ENCODE measurements at regions of chr3 and their contacts with region 1.

Region 1: DNA sequence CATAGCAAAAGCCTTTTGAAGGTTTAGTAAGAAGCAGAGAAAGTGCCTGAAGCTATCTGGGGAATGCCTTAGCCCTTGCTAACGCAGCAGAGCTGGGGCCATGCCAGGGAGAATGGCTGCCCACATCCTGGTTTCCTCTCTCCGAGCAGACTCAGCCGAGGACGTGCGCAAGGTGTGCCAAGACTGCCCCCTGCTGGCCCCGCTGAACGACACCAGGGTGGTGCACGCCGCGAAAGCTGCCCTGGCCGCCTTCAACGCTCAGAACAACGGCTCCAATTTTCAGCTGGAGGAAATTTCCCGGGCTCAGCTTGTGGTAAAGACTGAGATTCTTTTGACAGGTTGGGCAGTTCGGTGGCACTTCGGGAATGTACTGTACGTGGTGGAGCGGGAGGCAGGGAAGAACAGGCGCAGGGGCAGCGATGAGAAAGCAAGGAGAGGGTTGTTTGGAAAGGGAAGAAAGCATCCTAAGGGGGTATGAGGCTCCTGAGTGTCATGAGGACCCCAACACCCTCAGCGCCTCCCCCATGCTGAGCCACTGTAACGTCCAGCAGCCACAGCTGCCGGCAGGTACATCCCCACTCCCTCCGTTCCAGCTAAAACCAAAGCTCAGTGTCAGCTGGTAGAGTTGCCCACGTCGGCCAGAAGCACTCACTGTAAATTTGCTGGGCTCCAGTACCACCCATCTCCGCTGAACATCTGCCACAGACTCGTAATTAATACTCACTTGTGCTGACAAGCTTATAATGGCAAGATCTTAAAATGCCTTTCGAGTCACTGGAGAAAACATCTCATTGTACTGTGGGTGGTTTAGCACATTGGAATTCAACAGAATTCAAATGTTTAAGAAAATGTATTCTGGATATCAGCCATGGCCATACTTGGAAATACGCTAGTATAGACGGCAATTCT is 4.4 kb downstream of the AHSG start:
- ATAC-seq: peak; percentile 74 to 99 (median 84)
- H3K4me3 ChIP-seq: no peak overlapping the region
- H3K27ac ChIP-seq: no peak overlapping the region
- H3K4me1 ChIP-seq: peaks cover 2 to 3% of the 10 kb centered on the region in 2 donors

Region 2: GRCh38 chr3:186717039-186717457 is 99.8 kb after region 1 on chr3 and contains the start of gene KNG1:
- in situ Hi-C with region 1: no loop called
- ATAC-seq: no peak
- H3K4me3 ChIP-seq: no peak within 1 kb of the TSS
- H3K27ac ChIP-seq: no peak within 1 kb of the TSS
- H3K4me1 ChIP-seq: no peaks in the 10 kb centered on the region
- total RNA-seq, gene KNG1: 0.04 to 0.24 (median 0.10) TPM in 5 of 8 experiments, not detected in the others

Region 3: DNA sequence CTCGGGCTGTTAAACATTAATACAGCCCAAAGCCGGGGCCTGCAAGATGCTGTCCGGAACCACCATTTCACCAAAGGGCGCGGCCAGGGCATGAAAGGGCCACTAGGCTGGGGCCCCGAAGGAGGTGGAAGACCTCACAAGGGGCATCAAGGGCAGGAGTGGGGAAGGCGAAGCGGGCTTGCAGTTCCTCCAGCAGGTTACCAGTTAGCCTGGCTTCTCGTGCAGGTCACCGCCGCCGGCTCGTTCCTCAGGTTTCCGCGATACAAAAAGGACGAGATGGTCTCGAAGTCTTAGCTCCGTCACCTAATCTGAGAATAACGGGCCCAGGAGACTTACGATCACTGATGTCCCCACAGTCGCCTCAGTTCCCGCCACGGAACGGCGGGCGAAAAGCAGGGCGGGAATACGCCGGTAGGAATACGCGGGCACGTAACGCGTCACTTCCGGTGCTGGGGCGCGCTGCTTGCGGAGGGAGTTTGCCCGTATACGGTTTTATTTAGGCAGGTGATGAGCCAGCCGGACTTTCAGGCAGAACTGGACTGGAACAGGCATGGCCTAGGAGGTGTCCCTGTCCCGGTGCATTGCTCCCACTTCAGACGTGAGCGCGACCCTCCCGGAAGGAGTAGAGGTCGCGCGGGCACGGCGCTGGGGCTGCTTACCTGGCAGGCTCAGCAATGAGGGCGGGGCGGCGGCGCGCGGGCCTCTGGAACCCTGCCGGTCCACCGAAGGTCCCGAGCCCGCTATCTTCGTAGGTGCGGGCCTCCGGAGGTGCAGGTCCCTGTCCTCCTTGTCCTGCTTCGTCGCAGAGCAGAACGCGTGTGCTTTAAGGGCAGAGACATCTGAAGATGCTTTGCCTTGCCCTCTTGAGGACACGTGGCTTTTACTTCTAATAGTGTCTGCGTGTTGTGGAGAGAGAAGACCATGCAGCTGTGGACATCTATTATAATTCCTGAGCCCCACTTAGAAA is 189.1 kb after region 1 on chr3 and contains the start of gene RFC4:
- in situ Hi-C with region 1: loop called in 2 of 9 experiments (anchors 10 to 25 kb)
- ATAC-seq: peak; percentile 95 to 98 (median 97)
- H3K4me3 ChIP-seq: peak within 1 kb of the TSS; percentile 68 to 98 (median 88)
- H3K27ac ChIP-seq: peak within 1 kb of the TSS; percentile 88 to 95
- H3K4me1 ChIP-seq: peaks cover 10 to 13% of the 10 kb centered on the region in 2 donors
- total RNA-seq, gene RFC4: 8.7 to 69.0 (median 36.9) TPM

Region 4: DNA sequence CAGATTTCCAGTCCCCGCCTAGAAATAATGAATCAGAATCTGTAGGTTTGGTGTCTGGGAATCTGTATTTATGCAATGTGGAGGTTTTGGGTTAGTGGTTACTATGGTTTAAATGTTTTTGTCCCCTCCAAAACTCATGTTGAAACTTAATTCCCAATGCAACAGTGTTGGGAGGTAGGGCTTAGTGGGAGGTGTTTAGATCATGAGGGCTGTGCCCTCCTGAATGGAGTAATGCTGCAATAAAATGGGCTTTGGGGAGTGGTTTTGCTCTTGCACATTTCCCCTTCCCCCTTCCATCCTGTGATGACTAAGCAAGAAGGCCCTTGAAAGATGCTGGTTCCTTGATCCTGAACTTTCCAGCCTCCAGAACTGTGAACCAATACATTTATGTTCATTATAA is 198.1 kb after region 1 on chr3:
- in situ Hi-C with region 1: loop called in 2 of 9 experiments (anchors 10 to 25 kb)
- ATAC-seq: peak in 3 of 8 experiments; percentile 50 to 97 (median 82)
- H3K4me3 ChIP-seq: no peak overlapping the region
- H3K27ac ChIP-seq: no peak overlapping the region
- H3K4me1 ChIP-seq: no peaks in the 10 kb centered on the region